ENCODE measurements at regions of chr3 and their contacts with region 1.

Region 1: DNA sequence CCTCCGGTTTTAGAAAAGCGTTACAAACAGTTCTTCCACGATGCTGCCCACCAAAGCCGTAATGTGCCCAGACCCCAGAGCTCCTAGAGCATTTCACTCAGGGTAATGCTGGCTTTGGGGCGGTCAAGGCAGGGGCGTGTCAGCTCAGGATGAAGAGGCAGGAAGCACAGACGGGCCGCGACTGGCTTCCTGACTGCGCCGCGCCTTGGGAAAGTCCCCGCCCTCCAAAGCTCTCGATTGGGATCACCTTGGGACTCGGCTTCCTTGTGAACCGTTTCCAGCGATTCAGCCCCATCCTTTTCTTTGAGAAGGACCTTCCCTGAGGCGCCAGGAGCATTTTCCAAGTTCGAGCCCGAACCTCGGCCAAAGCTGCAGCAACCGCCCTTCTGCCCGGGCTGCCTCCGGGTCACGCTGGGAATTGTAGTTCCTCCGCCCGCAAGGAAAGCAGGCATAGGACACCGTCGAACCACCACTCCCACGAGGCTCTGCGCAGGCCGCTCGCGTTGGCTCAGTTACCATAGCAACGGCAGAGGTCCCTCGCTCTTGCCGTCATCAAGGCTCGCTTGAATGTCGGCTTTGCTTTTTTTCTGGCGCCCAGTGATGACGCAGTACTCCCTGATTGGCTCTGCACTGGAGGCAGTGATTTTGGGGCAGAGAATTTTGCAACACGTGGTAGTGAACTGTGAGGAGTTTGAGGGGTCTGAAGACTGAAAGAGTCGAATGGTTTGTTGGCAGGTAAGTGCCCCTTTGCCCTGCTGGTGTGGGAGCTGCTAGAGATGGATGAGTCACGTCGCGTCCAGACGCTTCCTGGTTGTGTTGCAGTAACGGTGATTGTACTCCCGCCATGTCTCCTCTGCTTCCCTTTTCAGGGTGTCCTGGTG is at the starts of genes CCDC191 and QTRT2:
- DNase-seq: peak; percentile 97 to 99 (median 98)
- H3K4me3 ChIP-seq: peak within 1 kb of the TSS; percentile 78 to 93
- H3K4me3 Mint-ChIP-seq: peak within 1 kb of the TSS; percentile 95 to 100 (median 99)
- H3K27ac ChIP-seq: peak within 1 kb of the TSS; percentile 86
- H3K27ac Mint-ChIP-seq: peak within 1 kb of the TSS; percentile 93 to 100 (median 99)
- H3K4me1 ChIP-seq: peaks cover 26% of the 10 kb centered on the region
- H3K4me1 Mint-ChIP-seq: peaks cover 21 to 57% (median 38%) of the 10 kb centered on the region in 4 donors
- H3K27me3 ChIP-seq: no peaks in the 10 kb centered on the region
- H3K27me3 Mint-ChIP-seq: peaks cover 0 to 2% of the 10 kb centered on the region in 2 donors
- total RNA-seq, gene CCDC191: 5.7 to 7.1 TPM
- total RNA-seq, gene QTRT2: 29.4 to 35.7 TPM

Region 2: DNA sequence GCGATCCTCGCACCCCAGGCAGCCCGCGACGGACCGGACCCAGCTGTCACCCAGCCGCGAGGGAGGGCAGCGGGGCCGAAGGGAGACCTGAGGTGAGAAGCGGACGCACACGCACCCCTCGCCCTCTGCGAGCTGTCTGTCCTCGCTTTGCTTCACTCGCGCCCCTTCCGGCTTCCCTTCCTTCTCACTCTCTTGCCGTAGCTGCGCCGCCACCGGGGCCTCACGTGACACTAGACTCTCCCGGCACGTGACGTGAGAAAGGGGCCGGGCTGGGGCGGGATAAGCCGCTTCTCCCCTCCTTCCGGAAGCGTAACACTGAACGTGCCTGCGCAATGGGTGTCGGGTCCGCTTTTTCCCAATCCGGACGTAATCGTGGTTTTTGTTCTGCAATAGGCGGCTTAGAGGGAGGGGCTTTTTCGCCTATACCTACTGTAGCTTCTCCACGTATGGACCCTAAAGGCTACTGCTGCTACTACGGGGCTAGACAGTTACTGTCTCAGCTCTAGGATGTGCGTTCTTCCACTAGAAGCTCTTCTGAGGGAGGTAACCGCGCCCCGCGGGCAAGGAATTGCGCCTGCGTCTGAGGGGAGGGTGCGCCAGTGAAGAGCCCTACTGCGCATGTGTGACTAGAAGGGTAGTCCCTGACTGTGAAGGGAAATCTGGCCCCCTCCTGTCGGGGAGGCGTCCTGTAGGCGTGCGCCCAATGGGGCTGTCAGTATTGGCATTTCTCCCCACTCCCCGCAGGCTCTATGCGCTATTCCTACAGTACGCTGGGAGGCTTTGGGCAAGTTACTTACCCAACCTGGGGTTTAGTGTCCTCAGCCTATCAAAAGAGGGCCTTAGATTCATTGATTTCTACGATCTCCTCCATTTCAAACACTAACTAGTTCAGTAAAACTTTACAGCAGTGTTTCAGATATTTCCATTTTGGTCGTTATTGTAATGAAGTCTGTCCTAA is 1494.4 kb before region 1 on chr3 and contains the starts of genes ATG3 and SLC35A5:
- CTCF ChIA-PET with region 1: no interaction called
- POLR2A ChIA-PET with region 1: no interaction called
- intact Hi-C with region 1: no loop called
- DNase-seq: peak; percentile 99 to 100 (median 99)
- H3K4me3 ChIP-seq: peak within 1 kb of the TSS; percentile 81 to 92
- H3K4me3 Mint-ChIP-seq: peak within 1 kb of the TSS; percentile 96 to 99 (median 98)
- H3K27ac ChIP-seq: peak within 1 kb of the TSS; percentile 99
- H3K27ac Mint-ChIP-seq: peak within 1 kb of the TSS; percentile 97 to 100 (median 100)
- H3K4me1 ChIP-seq: peaks cover 44% of the 10 kb centered on the region
- H3K4me1 Mint-ChIP-seq: peaks cover 29 to 59% (median 47%) of the 10 kb centered on the region in 4 donors
- H3K27me3 ChIP-seq: no peaks in the 10 kb centered on the region
- H3K27me3 Mint-ChIP-seq: no peaks in the 10 kb centered on the region
- total RNA-seq, gene ATG3: 49.0 to 54.0 TPM
- total RNA-seq, gene SLC35A5: 25.5 to 26.6 TPM

Region 3: GRCh38 chr3:113696658-113697499 is 359.5 kb before region 1 on chr3:
- CTCF ChIA-PET with region 1: no interaction called
- POLR2A ChIA-PET with region 1: interaction called, 8 read pairs
- intact Hi-C with region 1: loop called (anchors 1 kb)
- DNase-seq: peak; percentile 99 to 100 (median 100)
- H3K4me3 ChIP-seq: peak overlapping the region; percentile 74 to 90
- H3K4me3 Mint-ChIP-seq: no peak overlapping the region
- H3K27ac ChIP-seq: peak overlapping the region; percentile 86
- H3K27ac Mint-ChIP-seq: no peak overlapping the region
- H3K4me1 ChIP-seq: peaks cover 46% of the 10 kb centered on the region
- H3K4me1 Mint-ChIP-seq: peaks cover 20 to 33% (median 25%) of the 10 kb centered on the region in 4 donors
- H3K27me3 ChIP-seq: no peaks in the 10 kb centered on the region
- H3K27me3 Mint-ChIP-seq: no peaks in the 10 kb centered on the region

Region 4: DNA sequence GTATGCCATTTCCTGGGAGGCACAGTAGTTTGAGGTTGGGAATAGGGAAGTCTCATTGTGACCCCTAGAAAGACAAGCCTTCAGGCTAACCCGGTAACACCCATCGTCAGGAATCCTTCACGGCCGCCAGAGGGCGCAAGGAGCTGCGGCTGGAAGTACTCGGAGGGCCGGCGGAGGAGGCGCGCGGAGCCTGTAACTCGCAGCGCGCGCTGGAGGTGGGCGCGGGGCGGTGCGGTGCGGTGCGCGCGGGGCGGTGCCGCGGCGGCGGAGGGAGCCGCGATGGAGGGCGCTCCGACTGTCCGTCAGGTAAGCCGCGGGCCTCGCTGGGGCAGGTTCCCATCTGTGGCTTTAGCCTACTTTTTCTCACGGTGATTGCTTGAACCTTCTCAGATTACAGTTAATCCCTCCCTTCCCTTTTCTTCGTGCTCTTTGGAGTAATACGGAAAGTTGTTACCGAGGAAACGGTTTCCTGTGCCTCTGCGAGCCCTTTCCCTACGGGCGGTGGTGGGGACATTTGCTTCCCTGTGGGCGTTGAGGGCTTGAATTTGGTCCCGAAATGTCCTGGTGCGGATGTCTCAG is 217.7 kb before region 1 on chr3 and contains the start of gene GRAMD1C:
- CTCF ChIA-PET with region 1: interaction called, 5 read pairs
- POLR2A ChIA-PET with region 1: no interaction called
- intact Hi-C with region 1: loop called (anchors 5 kb)
- DNase-seq: peak; percentile 81 to 84 (median 83)
- H3K4me3 ChIP-seq: peak within 1 kb of the TSS; percentile 32 to 68
- H3K4me3 Mint-ChIP-seq: peak within 1 kb of the TSS; percentile 71 to 84 (median 81)
- H3K27ac ChIP-seq: no peak within 1 kb of the TSS
- H3K27ac Mint-ChIP-seq: peak within 1 kb of the TSS in 4 of 7 donors; percentile 31 to 56 (median 38)
- H3K4me1 ChIP-seq: peaks cover 7% of the 10 kb centered on the region
- H3K4me1 Mint-ChIP-seq: peaks cover 0 to 6% (median 6%) of the 10 kb centered on the region in 4 donors
- H3K27me3 ChIP-seq: no peaks in the 10 kb centered on the region
- H3K27me3 Mint-ChIP-seq: peaks cover 0 to 1% of the 10 kb centered on the region in 2 donors
- total RNA-seq, gene GRAMD1C: 2.6 to 2.8 TPM

Region 5: DNA sequence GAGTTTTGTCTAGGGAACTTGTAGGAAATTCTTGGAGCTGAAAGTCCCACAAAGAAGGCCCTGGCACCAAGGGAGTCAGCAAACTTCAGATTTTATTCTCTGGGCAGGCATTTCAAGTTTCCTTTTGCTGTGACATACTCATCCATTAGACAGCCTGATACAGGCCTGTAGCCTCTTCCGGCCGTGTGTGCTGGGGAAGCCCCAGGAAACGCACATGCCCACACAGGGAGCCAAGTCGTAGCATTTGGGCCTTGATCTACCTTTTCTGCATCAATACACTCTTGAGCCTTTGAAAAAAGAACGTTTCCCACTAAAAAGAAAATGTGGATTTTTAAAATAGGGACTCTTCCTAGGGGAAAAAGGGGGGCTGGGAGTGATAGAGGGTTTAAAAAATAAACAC is 252.5 kb after region 1 on chr3:
- CTCF ChIA-PET with region 1: no interaction called
- POLR2A ChIA-PET with region 1: no interaction called
- intact Hi-C with region 1: loop called (anchors 5 kb)
- DNase-seq: peak; percentile 68 to 83 (median 72)
- H3K4me3 ChIP-seq: peak overlapping the region in 1 of 2 donors; percentile 12
- H3K4me3 Mint-ChIP-seq: peak overlapping the region; percentile 37 to 88 (median 68)
- H3K27ac ChIP-seq: peak overlapping the region; percentile 88
- H3K27ac Mint-ChIP-seq: peak overlapping the region; percentile 92 to 98 (median 95)
- H3K4me1 ChIP-seq: peaks cover 72% of the 10 kb centered on the region
- H3K4me1 Mint-ChIP-seq: peaks cover 53 to 66% (median 59%) of the 10 kb centered on the region in 4 donors
- H3K27me3 ChIP-seq: no peaks in the 10 kb centered on the region
- H3K27me3 Mint-ChIP-seq: no peaks in the 10 kb centered on the region

Region 6: DNA sequence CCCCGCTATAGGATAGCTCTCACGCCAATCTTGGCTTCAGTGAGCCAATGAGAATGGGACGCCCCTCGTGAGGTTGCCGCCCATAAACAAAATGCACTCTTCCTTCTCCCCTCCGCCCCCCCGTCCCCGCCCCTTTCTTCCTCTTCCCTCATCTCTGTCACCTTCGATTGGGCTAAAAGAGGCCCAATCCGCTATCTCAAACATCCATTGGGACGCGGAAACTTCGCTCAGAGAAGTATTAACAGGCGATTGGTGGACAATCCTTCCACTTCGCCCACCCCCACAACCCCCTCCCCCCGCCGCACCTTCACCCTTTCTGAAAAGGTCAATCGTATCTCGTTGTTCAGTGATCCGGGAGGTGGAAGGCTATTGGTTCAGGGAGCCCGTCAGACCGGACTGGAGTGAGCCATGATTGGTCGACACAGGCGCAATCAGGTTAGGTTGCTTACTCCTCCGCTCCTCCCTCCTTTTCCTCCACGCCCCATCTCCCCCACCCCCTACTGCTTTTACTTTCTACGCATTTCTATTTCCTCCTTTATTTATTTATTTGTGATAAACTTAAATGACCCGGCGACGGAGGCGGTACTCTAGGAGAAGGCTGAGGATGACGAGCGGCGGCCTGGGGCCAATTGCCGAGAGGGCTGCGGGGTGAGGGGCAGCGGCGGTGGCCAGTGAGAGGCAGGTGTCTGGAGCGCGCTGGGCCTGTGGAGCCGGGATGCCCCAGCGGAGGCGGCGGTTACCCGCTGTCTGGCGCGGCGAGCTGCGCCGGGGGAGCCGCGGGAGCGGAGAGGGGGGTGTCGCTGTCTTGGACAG is 1091.2 kb after region 1 on chr3:
- CTCF ChIA-PET with region 1: no interaction called
- POLR2A ChIA-PET with region 1: no interaction called
- intact Hi-C with region 1: loop called (anchors 1 kb)
- DNase-seq: peak; percentile 97 to 100 (median 98)
- H3K4me3 ChIP-seq: peak overlapping the region; percentile 43 to 73
- H3K4me3 Mint-ChIP-seq: peak overlapping the region; percentile 93 to 100 (median 98)
- H3K27ac ChIP-seq: peak overlapping the region; percentile 97
- H3K27ac Mint-ChIP-seq: peak overlapping the region; percentile 90 to 100 (median 100)
- H3K4me1 ChIP-seq: peaks cover 25% of the 10 kb centered on the region
- H3K4me1 Mint-ChIP-seq: peaks cover 16 to 48% (median 28%) of the 10 kb centered on the region in 4 donors
- H3K27me3 ChIP-seq: no peaks in the 10 kb centered on the region
- H3K27me3 Mint-ChIP-seq: no peaks in the 10 kb centered on the region